CD8-positive, alpha-beta memory T cell (primary cell): ENCODE measurements at regions of chr1 and their contacts with region 1.

Region 1: DNA sequence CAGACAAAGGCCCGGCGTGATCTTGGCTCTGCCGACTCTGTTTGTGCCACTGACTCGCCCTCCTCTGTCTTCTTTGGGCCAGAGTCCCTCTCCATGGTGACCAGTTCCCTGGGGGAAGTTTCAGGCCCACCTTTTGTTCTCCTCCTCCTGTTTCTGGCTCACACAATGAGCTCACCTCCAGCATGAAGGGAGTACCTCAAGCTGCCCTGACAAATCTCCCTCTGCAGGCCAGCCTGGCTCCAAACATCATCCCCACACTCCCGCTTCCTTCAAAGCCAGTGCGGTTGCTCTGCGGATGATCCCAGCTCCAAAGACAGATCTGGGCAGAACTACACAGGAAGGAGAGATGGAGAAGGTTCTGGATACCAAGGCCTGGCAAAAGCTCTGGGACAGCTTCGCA is 576.6 kb downstream of the NPHP4 start:
- DNase-seq: no peak
- H3K4me3 ChIP-seq: no peak overlapping the region
- H3K4me3 Mint-ChIP-seq: no peak overlapping the region
- H3K27ac ChIP-seq: no peak overlapping the region
- H3K27ac Mint-ChIP-seq: peak overlapping the region in 2 of 8 donors; percentile 10 to 32
- H3K4me1 ChIP-seq: peaks cover 15% of the 10 kb centered on the region
- H3K4me1 Mint-ChIP-seq: peaks cover 14 to 27% (median 20%) of the 10 kb centered on the region in 3 donors
- H3K27me3 ChIP-seq: no peaks in the 10 kb centered on the region
- H3K27me3 Mint-ChIP-seq: no peaks in the 10 kb centered on the region

Region 2: GRCh38 chr1:5329068-5329739 is 86.4 kb before region 1 on chr1:
- CTCF ChIA-PET with region 1: no interaction called
- POLR2A ChIA-PET with region 1: interaction called, 12 read pairs
- DNase-seq: peak in 2 of 5 donors; percentile 8
- H3K4me3 ChIP-seq: peak overlapping the region; percentile 11
- H3K4me3 Mint-ChIP-seq: peak overlapping the region in 6 of 7 donors; percentile 58 to 76 (median 66)
- H3K27ac ChIP-seq: peak overlapping the region; percentile 55
- H3K27ac Mint-ChIP-seq: peak overlapping the region; percentile 86 to 98 (median 94)
- H3K4me1 ChIP-seq: peaks cover 36% of the 10 kb centered on the region
- H3K4me1 Mint-ChIP-seq: peaks cover 37 to 64% (median 55%) of the 10 kb centered on the region in 3 donors
- H3K27me3 ChIP-seq: no peaks in the 10 kb centered on the region
- H3K27me3 Mint-ChIP-seq: peaks cover 0 to 4% of the 10 kb centered on the region in 2 donors

Region 3: DNA sequence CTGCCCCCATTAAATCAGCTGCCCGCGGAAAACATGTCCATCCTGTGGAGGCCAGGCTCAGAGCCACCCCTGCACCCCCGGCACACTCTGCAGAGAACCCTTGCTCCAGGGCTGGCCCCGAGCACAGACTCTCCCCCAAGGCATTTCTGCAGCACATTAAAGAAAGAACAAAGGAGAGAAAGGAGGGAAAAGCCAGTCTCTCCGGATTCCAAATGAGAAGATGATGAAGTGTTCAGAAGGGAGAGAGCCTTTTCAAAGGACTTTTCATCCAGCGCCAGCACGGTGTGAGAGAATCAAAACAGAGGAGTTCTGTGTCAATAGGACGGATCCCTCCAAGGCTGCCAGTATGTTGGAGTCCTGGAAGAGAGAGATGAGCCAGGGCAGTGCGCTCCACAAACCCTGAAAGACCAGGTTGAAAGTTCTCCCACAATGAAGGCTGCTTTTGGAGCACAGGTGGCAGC is 78.3 kb after region 1 on chr1:
- CTCF ChIA-PET with region 1: no interaction called
- POLR2A ChIA-PET with region 1: no interaction called
- DNase-seq: no peak
- H3K4me3 ChIP-seq: no peak overlapping the region
- H3K4me3 Mint-ChIP-seq: no peak overlapping the region
- H3K27ac ChIP-seq: no peak overlapping the region
- H3K27ac Mint-ChIP-seq: peak overlapping the region in 1 of 8 donors; percentile 33
- H3K4me1 ChIP-seq: no peaks in the 10 kb centered on the region
- H3K4me1 Mint-ChIP-seq: no peaks in the 10 kb centered on the region
- H3K27me3 ChIP-seq: no peaks in the 10 kb centered on the region
- H3K27me3 Mint-ChIP-seq: peaks cover 13 to 44% of the 10 kb centered on the region in 2 donors